Activated B cell treated with CpG ODN at 0.5 μM for 24 hours (primary cell): ENCODE measurements at regions of chr5 and their contacts with region 1.

Region 1: GRCh38 chr5:35383041-35383440 is 152.8 kb upstream of the PRLR start:
- DNase-seq: no peak
- ATAC-seq: no peak
- H3K4me3 Mint-ChIP-seq: no peak overlapping the region
- H3K27ac Mint-ChIP-seq: no peak overlapping the region
- H3K4me1 Mint-ChIP-seq: no peaks in the 10 kb centered on the region
- H3K27me3 Mint-ChIP-seq: peaks cover 3% of the 10 kb centered on the region
- CTCF ChIP-seq: no peak

Region 2: DNA sequence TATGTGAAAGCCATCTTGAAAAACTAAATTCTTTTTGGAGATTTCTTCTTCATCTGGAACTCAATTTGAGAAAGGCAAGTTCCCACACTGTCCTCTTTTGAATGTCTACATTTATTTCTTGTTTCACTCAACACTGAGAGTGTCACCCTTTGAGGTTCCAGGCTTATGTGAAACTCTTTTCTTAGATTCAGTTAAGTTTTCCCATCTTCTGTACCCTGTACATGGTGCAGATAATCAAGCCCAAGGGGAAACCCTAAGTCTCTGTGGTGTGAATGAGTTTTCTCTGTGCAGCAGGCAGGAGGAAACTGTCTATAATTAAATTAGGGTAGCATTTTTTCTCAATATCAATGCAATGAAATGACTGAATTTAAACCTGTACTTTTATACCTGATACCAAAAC is 80.5 kb before region 1 on chr5:
- CTCF ChIA-PET with region 1: no interaction called
- POLR2A ChIA-PET with region 1: no interaction called
- intact Hi-C with region 1: loop called (anchors 5 kb)
- DNase-seq: no peak
- ATAC-seq: no peak
- H3K4me3 Mint-ChIP-seq: no peak overlapping the region
- H3K27ac Mint-ChIP-seq: no peak overlapping the region
- H3K4me1 Mint-ChIP-seq: no peaks in the 10 kb centered on the region
- H3K27me3 Mint-ChIP-seq: peaks cover 3% of the 10 kb centered on the region
- CTCF ChIP-seq: no peak

Region 3: GRCh38 chr5:35404705-35405104 is 21.7 kb after region 1 on chr5:
- CTCF ChIA-PET with region 1: no interaction called
- POLR2A ChIA-PET with region 1: no interaction called
- intact Hi-C with region 1: no loop called
- DNase-seq: no peak
- ATAC-seq: no peak
- H3K4me3 Mint-ChIP-seq: no peak overlapping the region
- H3K27ac Mint-ChIP-seq: no peak overlapping the region
- H3K4me1 Mint-ChIP-seq: no peaks in the 10 kb centered on the region
- H3K27me3 Mint-ChIP-seq: no peaks in the 10 kb centered on the region
- CTCF ChIP-seq: no peak